ENCODE measurements at regions of chr17 and their contacts with region 1.

Region 1: DNA sequence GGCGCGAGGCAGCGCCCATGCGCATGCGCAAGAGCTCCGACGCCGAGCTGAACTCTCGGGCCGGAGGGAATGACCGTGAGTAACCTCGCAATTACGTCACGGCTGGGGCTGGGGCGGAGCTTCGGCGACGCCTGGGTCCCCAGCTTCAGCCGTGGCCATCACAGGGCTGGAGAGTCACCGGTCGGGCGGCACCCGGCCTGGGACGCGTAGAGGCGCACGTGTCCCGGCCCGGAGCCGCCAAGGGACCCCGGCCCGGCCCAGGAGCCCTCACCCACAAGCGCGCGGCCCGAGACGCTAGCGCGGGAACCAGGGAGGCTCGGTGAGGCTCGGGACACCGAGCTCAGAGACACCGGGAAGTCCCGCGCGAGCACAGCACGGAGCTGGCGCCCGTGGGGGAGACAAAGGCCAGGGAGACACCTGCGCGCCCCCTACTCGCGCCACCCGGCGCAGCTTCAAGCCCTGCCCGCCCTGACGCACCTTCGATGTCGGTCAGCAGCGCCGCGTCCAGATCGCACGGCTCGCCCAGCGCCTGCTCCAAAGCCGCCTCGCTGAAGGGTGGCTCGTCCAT is 452 bp downstream of the SREBF1 start:
- DNase-seq: peak; percentile 99
- H3K4me3 ChIP-seq: peak overlapping the region; percentile 84 to 95 (median 92)
- H3K27ac ChIP-seq: peak overlapping the region; percentile 99 to 100 (median 100)
- H3K4me1 ChIP-seq: peaks cover 0 to 84% (median 80%) of the 10 kb centered on the region in 4 donors
- H3K27me3 ChIP-seq: no peaks in the 10 kb centered on the region
- CTCF ChIP-seq: no peak
- EP300 ChIP-seq: peak in 2 of 4 donors; percentile 33 to 88
- POLR2A ChIP-seq: peak; percentile 94 to 99

Region 2: DNA sequence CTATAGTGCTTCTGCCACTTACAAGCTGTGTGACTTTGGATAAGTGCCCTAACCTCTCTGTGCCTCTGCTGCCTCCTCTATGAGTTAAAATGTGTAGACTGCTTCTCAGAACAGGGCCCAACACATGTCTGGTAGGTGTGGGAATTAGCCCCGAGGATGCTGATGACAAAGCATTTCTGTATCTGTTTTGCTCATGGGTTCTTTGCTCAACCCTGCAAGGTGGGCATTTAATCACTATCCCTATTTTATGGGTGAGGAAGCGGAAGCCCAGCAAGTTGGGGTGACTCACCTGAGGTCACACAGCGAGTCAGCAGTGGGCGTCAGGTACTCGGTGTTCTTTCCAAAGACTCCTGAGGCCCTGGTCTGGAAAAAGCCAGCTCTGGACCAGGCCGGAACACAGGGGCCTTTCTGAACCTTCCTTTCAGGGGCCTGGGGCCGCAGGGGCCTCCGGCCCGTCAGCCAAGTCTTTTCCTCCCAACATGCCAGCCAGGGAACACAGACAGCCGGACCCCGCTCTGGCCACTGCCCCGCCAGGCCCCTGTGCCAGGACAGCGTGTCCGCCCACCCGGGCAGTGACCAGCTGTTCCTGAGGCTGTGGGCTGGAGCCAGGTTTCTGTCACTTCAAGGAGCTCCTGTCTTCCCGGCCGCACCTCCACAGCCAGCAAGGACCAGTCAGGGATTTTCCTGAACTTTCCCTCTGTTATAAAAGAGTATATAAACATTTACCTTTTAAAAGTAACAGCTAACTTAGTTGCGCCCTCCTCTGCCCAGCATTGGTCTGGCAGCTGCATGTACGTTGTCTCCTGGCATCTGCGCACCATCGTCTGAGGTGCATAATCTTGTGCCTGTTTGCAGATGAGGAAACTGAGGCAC is 62.1 kb before region 1 on chr17:
- intact Hi-C with region 1: no loop called
- DNase-seq: peak; percentile 90
- H3K4me3 ChIP-seq: peak overlapping the region in 1 of 4 donors; percentile 20
- H3K27ac ChIP-seq: peak overlapping the region; percentile 86 to 93 (median 89)
- H3K4me1 ChIP-seq: peaks cover 0 to 84% (median 67%) of the 10 kb centered on the region in 4 donors
- H3K27me3 ChIP-seq: no peaks in the 10 kb centered on the region
- CTCF ChIP-seq: peak; percentile 29 to 60 (median 54)
- EP300 ChIP-seq: peak in 2 of 4 donors; percentile 63 to 81
- POLR2A ChIP-seq: no peak

Region 3: DNA sequence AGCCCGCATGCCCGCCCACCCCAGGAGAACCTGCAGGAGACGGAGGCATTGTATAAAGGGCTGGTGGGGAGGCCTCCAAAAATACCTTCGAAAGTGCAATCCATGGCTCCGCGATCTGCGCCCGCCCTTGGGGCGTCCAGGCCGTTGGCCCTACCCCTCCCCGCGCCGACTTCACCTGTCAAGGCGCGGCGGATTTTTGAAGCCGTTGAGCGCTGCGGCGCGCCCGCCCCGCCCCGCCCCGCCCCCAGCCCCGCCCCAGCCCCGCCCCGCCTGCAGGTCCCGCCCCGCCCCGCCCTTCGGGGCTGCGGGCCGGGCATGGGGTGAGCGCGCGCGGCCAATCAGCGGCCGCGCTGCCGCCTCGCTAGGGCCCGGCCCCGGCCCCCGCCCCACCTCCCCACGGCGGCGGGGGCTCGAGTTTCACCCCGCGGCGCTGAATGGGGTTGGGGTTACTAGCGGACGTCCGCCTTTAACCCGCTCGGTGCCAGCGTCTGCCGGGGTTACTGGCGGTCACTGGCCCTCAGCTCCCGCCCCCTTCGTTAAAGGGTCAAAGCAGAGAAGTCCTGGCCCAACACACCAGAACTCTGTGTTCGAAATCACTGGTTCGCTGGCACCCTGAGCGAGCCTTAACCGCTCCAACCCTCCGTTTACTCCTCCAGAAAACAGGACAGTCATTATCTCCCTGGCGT is 12.8 kb before region 1 on chr17:
- intact Hi-C with region 1: loop called (anchors 2 kb)
- DNase-seq: peak; percentile 96
- H3K4me3 ChIP-seq: peak overlapping the region; percentile 32 to 55 (median 52)
- H3K27ac ChIP-seq: peak overlapping the region; percentile 83 to 90 (median 86)
- H3K4me1 ChIP-seq: peaks cover 0 to 86% (median 81%) of the 10 kb centered on the region in 4 donors
- H3K27me3 ChIP-seq: no peaks in the 10 kb centered on the region
- CTCF ChIP-seq: no peak
- EP300 ChIP-seq: peak in 1 of 4 donors; percentile 53
- POLR2A ChIP-seq: peak in 1 of 2 donors; percentile 48

Measured in sigmoid colon (tissue), 7 donors.